Right cardiac atrium (tissue), 5 donors: ENCODE measurements at regions of chr21 and their contacts with region 1.

Region 1: GRCh38 chr21:34745557-34746255 is 76.9 kb downstream of the CLIC6 start:
- DNase-seq: peak; percentile 71 to 85 (median 76)
- ATAC-seq: peak; percentile 90 to 92
- H3K4me3 ChIP-seq: no peak overlapping the region
- H3K27ac ChIP-seq: no peak overlapping the region
- H3K4me1 ChIP-seq: no peaks in the 10 kb centered on the region
- H3K27me3 ChIP-seq: no peaks in the 10 kb centered on the region

Region 2: DNA sequence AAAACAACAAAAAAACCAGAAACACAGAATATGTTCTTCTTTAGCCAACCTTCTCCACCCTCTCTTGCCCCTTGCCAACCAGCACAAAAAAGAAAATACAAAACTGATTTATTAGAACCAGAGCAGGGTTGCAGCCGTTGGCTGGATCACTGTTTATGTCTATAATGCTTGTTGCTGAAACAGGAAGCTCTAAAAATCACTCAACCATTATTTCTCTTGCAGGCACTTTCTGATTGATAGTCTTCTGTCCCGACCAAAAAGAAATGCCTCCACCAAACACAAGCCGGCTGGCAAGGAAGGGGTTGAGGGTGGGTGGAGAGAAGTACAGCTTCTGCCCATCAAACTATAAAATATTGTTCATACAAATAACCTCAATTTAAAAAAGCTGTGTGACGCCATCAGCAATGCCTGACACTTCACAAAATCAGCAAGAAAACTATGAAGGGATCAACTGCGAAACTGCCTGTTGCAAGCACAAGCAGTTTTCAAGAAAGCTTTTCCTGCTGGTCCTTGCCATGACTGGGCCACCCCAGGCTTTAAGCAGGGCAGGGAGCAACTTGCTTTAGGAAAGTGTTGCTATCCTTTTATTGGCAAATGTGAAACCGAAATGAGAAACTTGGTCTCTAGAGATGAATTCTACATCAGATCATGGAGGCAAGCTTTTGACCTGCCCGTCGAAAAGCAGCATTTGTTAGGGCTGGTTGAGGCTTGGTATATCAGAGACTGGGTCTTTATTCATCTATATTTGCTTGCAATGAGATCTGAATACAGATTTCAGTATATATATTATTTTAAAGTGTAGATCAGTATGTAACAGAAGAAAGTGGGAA is 129.2 kb after region 1 on chr21:
- intact Hi-C with region 1: loop called in 1 of 4 experiments (anchors 10 kb)
- DNase-seq: no peak
- ATAC-seq: no peak
- H3K4me3 ChIP-seq: no peak overlapping the region
- H3K27ac ChIP-seq: no peak overlapping the region
- H3K4me1 ChIP-seq: no peaks in the 10 kb centered on the region
- H3K27me3 ChIP-seq: no peaks in the 10 kb centered on the region

Region 3: GRCh38 chr21:35840197-35840799 is 1094.6 kb after region 1 on chr21:
- intact Hi-C with region 1: loop called in 3 of 4 experiments (anchors 5 to 10 kb)
- DNase-seq: peak in 2 of 3 donors; percentile 53 to 79
- ATAC-seq: peak in 1 of 2 donors; percentile 65
- H3K4me3 ChIP-seq: no peak overlapping the region
- H3K27ac ChIP-seq: no peak overlapping the region
- H3K4me1 ChIP-seq: no peaks in the 10 kb centered on the region
- H3K27me3 ChIP-seq: no peaks in the 10 kb centered on the region

Region 4: DNA sequence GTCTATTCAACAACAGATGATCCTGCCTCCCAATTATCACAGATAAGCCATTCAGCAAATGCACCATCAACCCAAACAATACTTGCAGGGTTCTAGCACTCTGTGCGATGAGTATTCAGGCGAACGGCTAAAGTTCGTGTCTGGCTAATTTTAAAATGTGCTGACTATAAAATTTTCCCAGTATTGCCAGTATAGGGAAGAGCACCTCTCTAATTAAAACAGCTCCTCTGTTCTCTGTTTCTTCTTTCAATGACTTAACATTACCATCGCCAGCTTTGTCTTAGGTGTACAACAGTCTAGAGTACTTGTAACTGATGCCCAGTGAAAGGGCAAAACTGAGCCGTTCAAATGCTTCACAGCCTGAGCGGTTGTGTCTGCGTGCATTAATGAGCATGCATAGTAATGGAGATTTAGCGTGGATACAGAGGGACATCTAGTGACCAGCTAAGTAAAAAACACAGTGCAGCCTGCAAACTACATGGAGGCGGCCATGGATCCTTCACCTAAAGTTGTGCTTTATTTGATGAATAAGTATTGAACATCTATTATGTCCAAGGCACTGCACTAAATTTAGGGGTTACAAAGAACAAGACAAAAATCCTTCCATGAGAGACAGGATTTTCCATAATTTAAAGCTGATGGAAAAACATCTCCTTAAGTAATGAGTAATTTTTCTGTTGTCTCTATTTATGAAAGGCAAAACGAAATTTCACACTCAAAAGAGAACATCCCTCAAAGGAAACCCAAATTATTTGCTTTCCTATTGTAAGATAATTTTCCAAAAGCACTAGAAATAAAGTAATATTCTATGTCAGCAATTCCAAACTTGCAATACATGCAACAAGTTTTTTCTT is 1194.6 kb after region 1 on chr21:
- intact Hi-C with region 1: loop called in 2 of 4 experiments (anchors 5 kb)
- DNase-seq: peak in 2 of 3 donors; percentile 22 to 50
- ATAC-seq: peak; percentile 95 to 96
- H3K4me3 ChIP-seq: no peak overlapping the region
- H3K27ac ChIP-seq: no peak overlapping the region
- H3K4me1 ChIP-seq: no peaks in the 10 kb centered on the region
- H3K27me3 ChIP-seq: no peaks in the 10 kb centered on the region

Region 5: DNA sequence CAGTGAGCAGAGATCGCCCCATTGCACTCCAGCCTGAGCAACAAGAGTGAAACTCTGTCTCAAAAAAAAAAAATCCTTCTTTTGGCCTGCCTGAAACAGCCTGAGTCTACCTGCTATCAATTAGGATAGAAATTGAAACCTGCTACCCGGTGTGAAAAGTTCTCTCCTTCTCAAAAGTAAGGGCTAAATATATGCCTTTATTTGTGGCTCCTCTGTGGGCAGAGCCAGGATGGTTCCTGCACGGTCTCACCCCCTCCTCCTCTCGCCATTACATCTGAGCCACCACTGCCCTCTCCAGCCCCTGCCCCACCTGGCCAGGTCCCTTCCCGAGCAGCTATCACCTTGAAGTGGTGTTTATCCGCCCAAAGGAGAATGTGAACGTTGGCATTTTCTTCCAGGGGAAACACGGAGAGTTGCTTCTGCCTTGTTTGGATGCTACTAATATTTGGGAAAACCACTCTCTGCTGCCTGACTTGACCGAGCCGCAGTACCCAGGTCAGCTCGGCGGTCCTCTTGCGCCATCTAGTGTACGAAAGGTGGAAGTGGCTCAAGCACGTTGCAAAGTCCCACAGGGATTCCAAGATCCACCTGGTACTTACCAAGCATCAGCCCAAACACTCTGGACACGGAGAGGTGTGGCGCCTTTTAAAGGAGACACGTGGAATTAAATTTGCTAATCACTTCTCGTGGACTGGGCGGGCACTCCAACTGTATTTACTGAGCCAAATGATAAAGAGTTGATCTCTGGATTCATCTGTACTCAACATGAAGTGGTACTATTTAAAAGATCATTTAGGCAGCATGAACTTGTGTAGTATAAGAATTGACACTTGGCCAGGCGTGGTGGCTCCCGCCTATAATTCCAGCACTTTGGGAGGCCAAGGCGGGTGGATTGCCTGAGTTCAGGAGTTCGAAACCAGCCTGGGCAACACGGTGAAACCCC is 1282.7 kb after region 1 on chr21:
- intact Hi-C with region 1: loop called in 2 of 4 experiments (anchors 10 kb)
- DNase-seq: peak in 2 of 3 donors; percentile 59 to 83
- ATAC-seq: peak; percentile 83 to 89
- H3K4me3 ChIP-seq: no peak overlapping the region
- H3K27ac ChIP-seq: no peak overlapping the region
- H3K4me1 ChIP-seq: peaks cover 2% of the 10 kb centered on the region
- H3K27me3 ChIP-seq: no peaks in the 10 kb centered on the region